Dorsolateral prefrontal cortex (tissue), 120 donors: ENCODE measurements at regions of chr11 and their contacts with region 1.

Region 1: GRCh38 chr11:72413914-72414628 is 20.3 kb downstream of the CLPB start:
- DNase-seq: peak; percentile 76 to 90 (median 85)
- H3K4me3 ChIP-seq: no peak overlapping the region
- H3K27ac ChIP-seq: peak overlapping the region in 41 of 59 donors; percentile 0 to 91 (median 46)
- H3K27me3 ChIP-seq: no peaks in the 10 kb centered on the region
- CTCF ChIP-seq: peak; percentile 42 to 93 (median 84)

Region 2: DNA sequence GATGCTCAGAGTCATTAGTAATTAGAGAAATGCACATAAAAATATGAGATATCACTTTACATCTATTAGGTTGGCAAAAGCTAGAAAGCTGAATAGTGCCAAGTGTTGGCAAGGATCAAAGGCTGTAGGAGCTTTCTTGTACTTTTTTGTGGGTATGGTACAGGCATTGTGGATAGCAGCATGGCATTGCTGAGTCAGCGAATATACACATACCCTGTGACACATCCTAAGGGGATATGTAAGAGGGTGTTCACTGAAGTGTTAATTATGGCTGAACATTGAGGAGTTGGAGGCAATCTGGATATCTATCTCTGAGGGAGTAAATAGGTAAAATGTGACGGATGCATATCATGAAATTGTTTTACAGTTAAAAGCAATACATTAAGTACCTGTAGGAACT is 442.4 kb before region 1 on chr11:
- intact Hi-C with region 1: no loop called
- DNase-seq: no peak
- H3K4me3 ChIP-seq: no peak overlapping the region
- H3K27ac ChIP-seq: no peak overlapping the region
- H3K27me3 ChIP-seq: no peaks in the 10 kb centered on the region
- CTCF ChIP-seq: no peak

Region 3: DNA sequence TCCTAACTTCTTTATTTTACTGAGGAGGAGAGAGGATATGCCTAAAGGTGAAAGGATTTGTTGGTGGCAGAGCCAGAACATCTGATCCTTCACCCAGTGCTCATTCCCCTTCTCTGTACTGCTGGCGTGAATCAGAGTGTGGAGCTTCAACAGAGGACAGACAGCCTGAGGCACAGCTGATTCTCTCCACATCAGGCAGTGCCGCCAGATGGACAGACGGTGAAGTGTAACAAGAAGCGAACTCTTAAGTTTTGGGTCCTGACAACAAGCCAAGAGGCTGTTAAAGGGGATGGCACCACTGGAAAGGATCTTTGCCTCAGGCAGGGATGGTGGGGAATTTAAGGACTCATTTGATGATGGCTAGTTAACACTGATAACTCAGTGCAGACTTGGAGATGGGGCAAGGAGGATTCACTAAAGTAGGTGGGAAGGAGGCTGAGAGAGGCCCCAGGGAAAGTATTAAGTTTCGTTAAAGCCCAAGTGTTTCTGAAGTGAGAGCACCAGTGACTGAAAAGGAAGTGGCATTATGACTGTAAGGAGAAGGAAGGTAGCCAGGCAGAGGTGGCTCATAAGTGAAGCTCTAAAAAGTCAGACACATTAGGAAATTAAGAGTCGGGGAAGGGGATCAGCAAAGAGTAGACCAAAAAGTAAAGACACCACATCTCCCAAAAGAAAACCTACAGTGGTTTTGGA is 61.1 kb before region 1 on chr11:
- intact Hi-C with region 1: loop called in 1 of 2 experiments (anchors 5 kb)
- DNase-seq: peak in 7 of 10 donors; percentile 31 to 79 (median 62)
- H3K4me3 ChIP-seq: no peak overlapping the region
- H3K27ac ChIP-seq: peak overlapping the region in 6 of 59 donors; percentile 7 to 51 (median 23)
- H3K27me3 ChIP-seq: no peaks in the 10 kb centered on the region
- CTCF ChIP-seq: peak in 29 of 56 donors; percentile 10 to 42 (median 22)